ENCODE measurements at regions of chr1 and their contacts with region 1.

Region 1: GRCh38 chr1:51926171-51926812 is 47.8 kb upstream of the NRDC start:
- DNase-seq: no peak
- H3K4me3 ChIP-seq: no peak overlapping the region
- CTCF ChIP-seq: peak; percentile 52

Region 2: DNA sequence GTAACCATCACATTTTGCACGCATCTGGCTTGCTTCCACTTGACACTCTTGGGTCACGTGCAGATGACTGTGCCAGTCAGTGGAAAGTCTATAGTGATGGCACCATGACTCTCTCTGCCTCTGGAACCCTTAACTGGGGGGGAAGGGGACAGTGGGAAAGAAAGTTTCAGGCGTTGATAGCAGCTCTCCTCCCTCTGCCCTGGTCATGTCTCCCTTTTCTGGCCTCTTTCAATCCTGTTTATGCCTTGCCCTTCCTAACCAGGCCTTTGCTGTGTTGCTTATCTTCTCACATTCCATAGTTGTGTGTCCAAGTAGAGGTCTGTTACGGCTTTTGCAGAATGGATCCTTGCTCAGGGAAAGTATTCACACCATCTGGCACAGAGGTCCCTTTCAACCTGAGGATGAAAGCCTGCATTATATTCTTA is 141.3 kb before region 1 on chr1:
- CTCF ChIA-PET with region 1: no interaction called
- POLR2A ChIA-PET with region 1: no interaction called
- DNase-seq: no peak
- H3K4me3 ChIP-seq: no peak overlapping the region
- CTCF ChIP-seq: no peak

Region 3: GRCh38 chr1:51814513-51814912 is 111.8 kb before region 1 on chr1:
- CTCF ChIA-PET with region 1: no interaction called
- POLR2A ChIA-PET with region 1: no interaction called
- DNase-seq: no peak
- H3K4me3 ChIP-seq: no peak overlapping the region
- CTCF ChIP-seq: no peak

Region 4: DNA sequence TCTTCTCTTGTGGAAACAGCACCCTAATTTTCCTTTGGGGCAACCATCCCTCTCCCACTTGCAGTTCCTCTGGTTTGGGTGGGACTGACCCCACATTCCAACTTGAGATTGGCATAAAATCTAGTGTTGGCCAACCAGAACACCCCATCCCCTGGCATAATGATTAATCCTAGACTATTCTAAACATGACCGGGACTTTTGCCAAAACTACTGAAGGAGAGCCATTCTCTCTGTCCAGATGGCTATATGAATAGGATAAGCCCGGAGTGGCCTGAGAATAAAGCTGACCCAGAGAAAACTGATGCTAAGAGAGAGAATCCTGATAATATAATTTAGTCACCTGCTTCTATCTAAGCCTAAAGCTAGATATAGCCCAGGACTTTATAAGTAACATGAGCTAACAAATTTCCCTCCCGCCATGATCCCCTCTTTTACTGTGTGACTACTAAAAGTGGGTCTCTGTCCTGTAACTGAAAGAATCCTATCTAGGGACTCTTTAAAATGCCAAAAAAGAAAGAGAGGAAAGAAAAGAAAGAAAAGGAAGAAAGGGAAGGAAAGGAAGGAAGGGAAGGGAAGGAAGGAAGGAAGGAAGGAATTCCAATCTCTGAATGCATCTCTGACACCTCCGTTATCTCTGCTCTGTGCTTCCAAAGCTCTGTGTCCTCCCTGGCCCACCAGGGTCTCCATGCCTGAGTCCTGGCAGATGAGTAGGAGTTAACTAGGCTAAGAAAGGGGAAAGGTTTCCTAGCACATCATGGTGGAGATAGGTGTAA is 19.8 kb before region 1 on chr1:
- CTCF ChIA-PET with region 1: interaction called, 80 read pairs
- POLR2A ChIA-PET with region 1: interaction called, 5 read pairs
- DNase-seq: no peak
- H3K4me3 ChIP-seq: no peak overlapping the region
- CTCF ChIP-seq: no peak